ENCODE measurements at regions of chrX and their contacts with region 1.

Region 1: GRCh38 chrX:100636321-100636991 is at the start of gene TSPAN6:
- DNase-seq: peak; percentile 84
- ATAC-seq: peak; percentile 99
- H3K4me3 ChIP-seq: peak within 1 kb of the TSS; percentile 63
- H3K27ac ChIP-seq: peak within 1 kb of the TSS; percentile 44
- H3K4me1 ChIP-seq: no peaks in the 10 kb centered on the region
- H3K27me3 ChIP-seq: no peaks in the 10 kb centered on the region; the same call in 1 of the 2 replicates
- CTCF ChIP-seq: peak; percentile 66
- POLR2A ChIP-seq: peak; percentile 48; the same call in 1 of the 2 replicates
- RAD21 ChIP-seq: peak; percentile 39
- total RNA-seq, gene TSPAN6: 20.1 and 36.1 TPM in 2 replicates

Region 2: DNA sequence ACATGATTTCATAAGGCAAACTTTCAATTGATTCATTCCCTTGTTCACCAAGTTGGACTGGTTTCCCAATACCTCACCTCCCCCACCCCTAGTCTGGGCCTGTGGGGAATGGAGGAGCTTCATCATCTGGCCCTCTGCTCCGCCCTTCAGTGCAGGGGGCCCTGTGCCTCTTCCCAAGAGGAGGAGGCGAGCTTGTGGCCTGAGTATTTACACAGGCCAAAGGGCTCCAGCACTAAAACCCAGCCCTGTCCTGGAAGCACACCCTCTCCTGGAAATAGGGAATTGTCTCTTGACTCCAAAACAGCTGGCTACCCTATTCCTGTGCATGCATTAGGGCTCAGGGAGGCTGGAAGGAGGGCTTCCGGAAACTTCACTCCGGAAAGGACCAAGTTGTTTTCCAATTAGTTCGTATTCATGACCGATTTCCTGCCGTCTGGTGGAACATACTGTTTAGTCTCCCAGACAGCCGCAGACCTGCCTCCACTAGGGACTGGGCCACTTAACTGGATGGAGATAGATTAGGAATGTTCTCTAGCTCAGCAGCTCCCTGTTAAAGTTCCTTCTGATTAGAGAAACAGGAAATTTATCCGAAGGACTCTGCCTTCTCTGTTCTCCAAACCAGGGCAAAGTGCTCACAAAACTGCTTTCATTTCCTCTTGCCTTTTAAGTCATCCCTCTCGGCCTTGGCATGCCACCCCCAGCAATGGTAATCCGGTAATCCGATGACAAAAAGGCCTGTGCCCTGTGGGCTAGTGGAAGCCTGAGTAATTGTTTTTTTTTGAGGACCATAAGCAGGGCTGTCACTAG is 13.3 kb after region 1 on chrX:
- CTCF ChIA-PET with region 1: interaction called, 6 read pairs
- POLR2A ChIA-PET with region 1: interaction called, 12 read pairs
- dilution Hi-C with region 1: no loop called
- in situ Hi-C with region 1: no loop called
- intact Hi-C with region 1: no loop called
- DNase-seq: peak; percentile 90
- ATAC-seq: peak; percentile 88
- H3K4me3 ChIP-seq: peak overlapping the region; percentile 2; the same call in 1 of the 2 replicates
- H3K27ac ChIP-seq: peak overlapping the region; percentile 96
- H3K4me1 ChIP-seq: peaks cover 20% of the 10 kb centered on the region
- H3K27me3 ChIP-seq: no peaks in the 10 kb centered on the region
- CTCF ChIP-seq: no peak
- POLR2A ChIP-seq: peak; percentile 61; the same call in 1 of the 2 replicates
- RAD21 ChIP-seq: no peak

Measured in IMR-90 (cell line).